ENCODE measurements at regions of chr17 and their contacts with region 1.

Region 1: DNA sequence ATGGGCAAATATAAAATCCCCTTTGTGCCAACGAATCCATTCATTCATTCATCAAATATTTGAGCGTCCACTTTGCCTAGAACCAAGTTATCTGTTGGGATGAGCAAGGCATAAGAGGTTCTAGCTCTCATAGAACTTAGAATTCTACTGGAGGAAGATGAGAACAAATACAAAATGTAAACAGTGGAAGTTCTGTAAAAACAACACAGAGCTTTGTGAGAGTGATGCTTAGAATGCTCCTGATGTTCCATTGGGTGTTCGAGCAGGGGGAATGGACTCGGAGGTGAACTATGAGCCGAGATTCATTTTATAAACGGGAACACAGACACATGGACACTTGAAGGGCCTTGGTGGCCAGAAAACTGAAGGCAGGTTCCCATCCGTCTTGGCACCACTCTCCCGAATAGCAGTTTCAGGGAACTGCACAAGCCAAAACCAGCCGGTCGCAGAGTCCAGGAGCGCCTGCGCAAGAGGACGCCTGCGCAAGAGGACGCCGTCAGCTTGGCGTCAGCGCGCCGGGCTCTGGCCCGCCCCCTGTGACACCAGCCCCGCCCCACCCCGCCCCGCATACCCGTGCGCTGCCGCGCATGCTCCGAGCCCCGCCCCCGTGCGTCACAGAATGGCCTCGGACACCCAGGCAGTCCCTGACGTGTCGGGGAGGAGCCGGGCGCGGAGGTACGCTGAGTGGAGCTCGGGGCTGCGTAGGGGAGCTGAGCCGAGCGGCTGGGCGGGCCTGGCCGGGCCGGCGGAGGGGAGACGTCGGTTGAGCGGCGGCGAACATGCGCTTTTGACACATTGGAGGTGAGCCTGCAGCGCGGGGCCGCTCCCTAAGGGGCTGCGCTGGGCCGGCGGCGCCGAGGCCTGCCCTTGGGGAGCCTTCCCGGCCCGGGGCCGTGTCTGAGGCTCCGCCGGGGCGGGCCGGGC is at the start of gene NDEL1:
- DNase-seq: peak; percentile 99 to 100
- ATAC-seq: peak; percentile 97 to 99 (median 98)
- H3K4me3 ChIP-seq: peak within 1 kb of the TSS; percentile 77 to 98 (median 86)
- H3K27ac ChIP-seq: peak within 1 kb of the TSS; percentile 94 to 100 (median 100)
- H3K4me1 ChIP-seq: peaks cover 0 to 50% (median 30%) of the 10 kb centered on the region in 9 donors
- H3K27me3 ChIP-seq: no peaks in the 10 kb centered on the region
- CTCF ChIP-seq: no peak
- total RNA-seq, gene NDEL1: 21.2 to 37.0 (median 28.4) TPM

Region 2: GRCh38 chr17:8383143-8383822 is 52.2 kb before region 1 on chr17 and contains the start of gene RPL26:
- intact Hi-C with region 1: loop called in 2 of 10 experiments (anchors 10 kb)
- DNase-seq: peak; percentile 92 to 98
- ATAC-seq: peak; percentile 91 to 97 (median 94)
- H3K4me3 ChIP-seq: peak within 1 kb of the TSS; percentile 64 to 87 (median 77)
- H3K27ac ChIP-seq: peak within 1 kb of the TSS; percentile 46 to 90 (median 86)
- H3K4me1 ChIP-seq: peaks cover 6 to 47% (median 31%) of the 10 kb centered on the region in 9 donors
- H3K27me3 ChIP-seq: no peaks in the 10 kb centered on the region
- CTCF ChIP-seq: peak; percentile 95 to 100 (median 99)
- total RNA-seq, gene RPL26: 1,004 to 1,398 (median 1,028) TPM

Region 3: DNA sequence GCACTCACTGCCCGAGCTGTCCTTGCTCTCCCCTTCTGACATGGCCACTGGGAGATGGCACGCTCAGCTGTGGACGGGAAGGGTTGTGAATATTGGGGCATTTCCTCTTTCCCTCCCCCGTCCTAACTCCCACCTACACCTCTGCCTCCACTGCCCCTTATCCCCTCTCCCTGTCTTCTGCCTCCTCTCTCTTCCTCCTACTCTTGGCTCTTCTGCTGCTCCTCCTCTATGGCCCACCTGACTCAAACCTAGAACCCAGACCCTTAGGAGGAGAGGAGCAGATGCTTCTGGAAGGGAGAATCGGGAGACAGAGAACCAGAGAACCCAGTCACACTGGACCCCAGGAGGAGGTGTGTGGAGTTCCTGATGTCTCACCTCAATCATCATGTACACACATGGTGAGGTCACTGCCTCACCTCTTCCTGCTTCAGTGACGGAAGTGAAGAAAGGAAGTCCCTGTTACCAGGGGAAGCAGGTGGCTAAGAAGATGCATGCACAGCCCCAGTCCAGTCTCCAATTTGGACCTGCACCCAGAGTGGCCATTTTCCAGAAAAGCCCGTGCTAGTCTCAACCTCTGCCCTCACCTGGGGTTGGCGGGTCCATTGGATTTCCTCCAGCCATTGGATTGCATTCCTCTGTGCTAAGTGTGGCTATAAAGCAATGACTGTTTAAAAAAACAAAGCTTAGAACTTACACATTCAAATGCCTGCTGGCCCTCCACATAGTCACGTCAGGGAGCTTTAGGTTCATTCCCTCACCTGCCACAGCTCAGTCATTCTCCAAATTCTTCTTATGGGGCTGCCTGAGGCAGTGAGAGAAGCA is 41.9 kb before region 1 on chr17:
- intact Hi-C with region 1: loop called in 3 of 10 experiments (anchors 2 to 10 kb)
- DNase-seq: no peak
- ATAC-seq: peak in 5 of 8 donors; percentile 30 to 52 (median 35)
- H3K4me3 ChIP-seq: no peak overlapping the region
- H3K27ac ChIP-seq: peak overlapping the region in 1 of 10 donors; percentile 61
- H3K4me1 ChIP-seq: peaks cover 0 to 11% (median 0%) of the 10 kb centered on the region in 9 donors
- H3K27me3 ChIP-seq: peaks cover 0 to 62% (median 44%) of the 10 kb centered on the region in 7 donors
- CTCF ChIP-seq: no peak

Measured in heart right ventricle (tissue), 16 donors.